ENCODE measurements at regions of chr21 and their contacts with region 1.

Region 1: GRCh38 chr21:38712071-38712470 is 93.7 kb upstream of the ETS2 start:
- DNase-seq: no peak
- H3K4me3 Mint-ChIP-seq: no peak overlapping the region
- H3K27ac Mint-ChIP-seq: no peak overlapping the region
- H3K4me1 Mint-ChIP-seq: no peaks in the 10 kb centered on the region
- H3K27me3 Mint-ChIP-seq: peaks cover 15% of the 10 kb centered on the region

Region 2: GRCh38 chr21:38505654-38506515 is 206.2 kb before region 1 on chr21:
- intact Hi-C with region 1: loop called (anchors 5 kb)
- DNase-seq: no peak
- H3K4me3 Mint-ChIP-seq: no peak overlapping the region
- H3K27ac Mint-ChIP-seq: peak overlapping the region; percentile 11
- H3K4me1 Mint-ChIP-seq: peaks cover 15% of the 10 kb centered on the region
- H3K27me3 Mint-ChIP-seq: peaks cover 10% of the 10 kb centered on the region

Region 3: GRCh38 chr21:38861989-38862683 is 150.1 kb after region 1 on chr21:
- intact Hi-C with region 1: no loop called
- DNase-seq: no peak
- H3K4me3 Mint-ChIP-seq: no peak overlapping the region
- H3K27ac Mint-ChIP-seq: no peak overlapping the region
- H3K4me1 Mint-ChIP-seq: no peaks in the 10 kb centered on the region
- H3K27me3 Mint-ChIP-seq: peaks cover 10% of the 10 kb centered on the region